ENCODE measurements at regions of chr4 and their contacts with region 1.

Region 1: DNA sequence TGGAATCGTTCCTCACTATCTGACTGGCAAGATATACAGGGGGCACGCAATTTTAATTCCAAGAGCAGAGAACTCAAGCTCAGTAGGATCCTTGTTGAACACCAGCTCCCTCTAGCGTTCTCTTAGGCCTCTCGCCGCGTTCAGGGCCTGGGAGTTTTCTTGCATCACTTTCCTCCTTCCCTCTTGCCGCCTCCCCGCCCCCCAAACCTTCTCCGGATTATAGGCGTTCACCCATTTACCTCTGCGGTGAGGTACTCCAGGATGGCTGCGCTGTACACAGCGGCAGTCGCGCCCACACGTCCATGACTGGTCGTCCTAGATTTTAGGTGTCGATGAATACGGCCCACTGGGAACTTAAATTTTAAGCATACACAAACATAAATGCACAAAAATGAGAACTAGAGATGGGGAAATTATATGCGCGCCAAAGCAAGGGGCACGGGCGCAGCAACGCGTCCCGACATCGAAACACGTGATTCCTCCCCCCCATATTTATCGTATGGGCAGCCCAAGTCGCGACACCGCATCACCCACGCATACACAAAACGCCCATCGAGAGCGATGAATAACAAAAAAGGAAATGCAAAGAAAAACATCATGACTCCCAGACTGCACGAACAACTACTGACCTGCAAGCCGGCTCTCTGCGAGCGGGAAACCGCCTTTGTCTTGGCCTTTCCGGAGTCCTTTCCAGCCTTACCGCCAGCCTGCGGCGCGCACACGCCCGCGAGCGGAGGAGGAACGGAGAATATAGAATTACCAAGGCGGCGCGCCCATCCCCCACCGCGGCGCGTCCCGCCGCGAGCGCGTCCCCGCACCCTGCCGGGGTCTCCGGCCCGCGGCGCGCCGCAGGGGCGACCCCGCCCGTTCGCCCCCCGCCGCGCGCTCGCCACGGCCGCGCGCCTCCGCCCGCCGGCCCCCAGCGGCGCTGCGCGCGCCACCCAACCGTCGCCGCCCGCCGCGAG is 759 bp downstream of the H2AZ1 start:
- DNase-seq: peak; percentile 82 to 85
- H3K4me3 ChIP-seq: peak overlapping the region; percentile 96 to 100 (median 100)
- H3K27ac ChIP-seq: peak overlapping the region; percentile 99
- H3K4me1 ChIP-seq: peaks cover 0 to 14% (median 7%) of the 10 kb centered on the region in 4 experiments; a peak in 5 of 7 replicates
- H3K27me3 ChIP-seq: no peaks in the 10 kb centered on the region
- CTCF ChIP-seq: peak; percentile 61 to 89 (median 71)
- EP300 ChIP-seq: no peak
- POLR2A ChIP-seq: peak; percentile 82 to 98
- RAD21 ChIP-seq: peak; percentile 49 to 53

Region 2: GRCh38 chr4:99927566-99927965 is 21.8 kb before region 1 on chr4:
- CTCF ChIA-PET with region 1: interaction called, 3 read pairs
- POLR2A ChIA-PET with region 1: interaction called, 29 read pairs
- DNase-seq: no peak
- H3K4me3 ChIP-seq: no peak overlapping the region
- H3K27ac ChIP-seq: no peak overlapping the region
- H3K4me1 ChIP-seq: no peaks in the 10 kb centered on the region
- H3K27me3 ChIP-seq: no peaks in the 10 kb centered on the region
- CTCF ChIP-seq: no peak
- EP300 ChIP-seq: no peak
- POLR2A ChIP-seq: no peak
- RAD21 ChIP-seq: no peak

Region 3: GRCh38 chr4:99960648-99961047 is 11.3 kb after region 1 on chr4:
- CTCF ChIA-PET with region 1: no interaction called
- POLR2A ChIA-PET with region 1: interaction called, 13 read pairs
- DNase-seq: no peak
- H3K4me3 ChIP-seq: no peak overlapping the region
- H3K27ac ChIP-seq: no peak overlapping the region
- H3K4me1 ChIP-seq: no peaks in the 10 kb centered on the region
- H3K27me3 ChIP-seq: no peaks in the 10 kb centered on the region
- CTCF ChIP-seq: no peak
- EP300 ChIP-seq: no peak
- POLR2A ChIP-seq: no peak
- RAD21 ChIP-seq: no peak

Region 4: GRCh38 chr4:100008048-100008447 is 58.7 kb after region 1 on chr4:
- CTCF ChIA-PET with region 1: no interaction called
- POLR2A ChIA-PET with region 1: interaction called, 14 read pairs
- DNase-seq: no peak
- H3K4me3 ChIP-seq: no peak overlapping the region
- H3K27ac ChIP-seq: no peak overlapping the region
- H3K4me1 ChIP-seq: no peaks in the 10 kb centered on the region
- H3K27me3 ChIP-seq: no peaks in the 10 kb centered on the region
- CTCF ChIP-seq: no peak
- EP300 ChIP-seq: no peak
- POLR2A ChIP-seq: no peak
- RAD21 ChIP-seq: no peak